Gastrocnemius medialis (tissue), 4 donors: ENCODE measurements at regions of chr14 and their contacts with region 1.

Region 1: GRCh38 chr14:77616454-77617229 is at the start of gene SPTLC2:
- DNase-seq: peak; percentile 98 to 99
- ATAC-seq: peak; percentile 96 to 97
- H3K4me3 ChIP-seq: peak within 1 kb of the TSS; percentile 71 to 84 (median 80)
- H3K27ac ChIP-seq: peak within 1 kb of the TSS; percentile 67 to 76 (median 74)
- H3K4me1 ChIP-seq: peaks cover 12 to 18% of the 10 kb centered on the region in 2 donors
- H3K27me3 ChIP-seq: no peaks in the 10 kb centered on the region
- CTCF ChIP-seq: peak in 1 of 5 experiments; percentile 2
- POLR2A ChIP-seq: peak; percentile 55 to 73
- total RNA-seq, gene SPTLC2: 6.5 to 10.4 (median 7.0) TPM

Region 2: GRCh38 chr14:76812211-76813044 is 804.2 kb before region 1 on chr14 and contains the start of gene ANGEL1:
- in situ Hi-C with region 1: no loop called
- intact Hi-C with region 1: loop called (anchors 10 kb)
- DNase-seq: peak; percentile 92 to 97
- ATAC-seq: peak; percentile 91
- H3K4me3 ChIP-seq: peak within 1 kb of the TSS; percentile 71 to 91 (median 86)
- H3K27ac ChIP-seq: peak within 1 kb of the TSS; percentile 86 to 92 (median 90)
- H3K4me1 ChIP-seq: peaks cover 8 to 16% of the 10 kb centered on the region in 2 donors
- H3K27me3 ChIP-seq: no peaks in the 10 kb centered on the region
- CTCF ChIP-seq: peak in 2 of 5 experiments; percentile 16 to 38
- POLR2A ChIP-seq: peak; percentile 83 to 94
- total RNA-seq, gene ANGEL1: 8.6 to 16.9 (median 12.7) TPM

Region 3: DNA sequence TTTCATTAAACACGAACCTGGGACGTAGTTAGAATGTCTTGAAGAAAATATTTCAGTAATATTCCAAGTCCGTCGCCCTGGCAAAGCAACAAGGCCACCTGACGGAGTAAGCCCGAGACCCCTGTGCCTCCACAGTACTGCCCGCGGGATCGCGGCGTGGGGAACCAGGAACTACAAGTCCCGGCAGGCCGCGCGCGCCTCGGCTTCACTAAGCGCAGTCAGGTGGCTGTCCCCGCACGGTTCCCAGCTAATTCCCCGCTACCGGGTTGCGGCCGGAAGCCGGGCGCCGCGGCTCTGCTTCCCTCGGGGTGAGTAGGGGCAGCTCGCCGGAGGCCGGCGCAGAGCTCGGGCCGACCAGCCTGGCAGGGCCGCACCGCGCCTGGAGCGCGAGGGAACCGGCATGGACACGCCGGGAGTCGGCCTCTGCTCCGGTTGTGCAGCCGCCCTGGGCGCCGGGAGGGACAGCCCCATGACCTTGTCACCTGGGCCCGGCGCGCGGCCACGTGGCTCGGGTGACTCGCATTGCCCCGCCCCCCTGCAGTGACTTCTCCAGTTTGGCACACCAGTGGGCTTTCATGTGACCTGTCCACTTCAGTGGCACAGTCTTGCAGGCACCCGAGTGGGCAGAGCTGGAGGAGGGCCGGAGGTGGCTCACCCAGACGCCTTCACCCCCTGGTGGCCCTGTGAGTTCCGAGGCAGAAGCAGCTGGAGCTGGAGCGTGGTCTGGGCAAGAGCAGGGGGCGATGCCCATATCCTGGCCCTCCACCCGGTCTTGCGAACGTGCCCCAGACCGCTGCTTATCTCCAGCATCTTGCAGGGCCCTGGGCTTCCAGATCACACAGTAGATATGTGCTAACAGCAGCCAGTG is 183.5 kb after region 1 on chr14 and contains the start of gene ADCK1:
- in situ Hi-C with region 1: no loop called
- intact Hi-C with region 1: loop called (anchors 5 kb)
- DNase-seq: peak; percentile 86 to 97
- ATAC-seq: peak; percentile 93 to 96
- H3K4me3 ChIP-seq: peak within 1 kb of the TSS; percentile 66 to 94 (median 89)
- H3K27ac ChIP-seq: peak within 1 kb of the TSS; percentile 87 to 98 (median 96)
- H3K4me1 ChIP-seq: peaks cover 12 to 14% of the 10 kb centered on the region in 2 donors
- H3K27me3 ChIP-seq: no peaks in the 10 kb centered on the region
- CTCF ChIP-seq: peak; percentile 32 to 52 (median 41)
- POLR2A ChIP-seq: peak; percentile 75 to 83
- total RNA-seq, gene ADCK1: 3.5 to 11.0 (median 5.5) TPM